ENCODE measurements at regions of chr3 and their contacts with region 1.

Region 1: GRCh38 chr3:121467085-121467484 is 78.7 kb downstream of the POLQ start:
- DNase-seq: no peak
- H3K4me3 ChIP-seq: no peak overlapping the region
- H3K27ac ChIP-seq: no peak overlapping the region
- H3K4me1 ChIP-seq: no peaks in the 10 kb centered on the region
- CTCF ChIP-seq: no peak

Region 2: GRCh38 chr3:121529308-121529707 is 62.2 kb after region 1 on chr3:
- CTCF ChIA-PET with region 1: no interaction called
- POLR2A ChIA-PET with region 1: no interaction called
- intact Hi-C with region 1: loop called (anchors 2 kb)
- DNase-seq: no peak
- H3K4me3 ChIP-seq: no peak overlapping the region
- H3K27ac ChIP-seq: no peak overlapping the region
- H3K4me1 ChIP-seq: no peaks in the 10 kb centered on the region
- CTCF ChIP-seq: peak; percentile 68

Measured in OCI-LY7 (cell line).